ENCODE measurements at regions of chr2 and their contacts with region 1.

Region 1: GRCh38 chr2:230602562-230603230 is 109.9 kb upstream of the CAB39 start:
- DNase-seq: no peak
- ATAC-seq: peak; percentile 70
- H3K4me3 ChIP-seq: peak overlapping the region; percentile 32; the same call in 1 of the 2 replicates
- H3K27ac ChIP-seq: peak overlapping the region; percentile 86
- H3K4me1 ChIP-seq: peaks cover 47% of the 10 kb centered on the region
- H3K27me3 ChIP-seq: no peaks in the 10 kb centered on the region
- CTCF ChIP-seq: no peak
- EP300 ChIP-seq: no peak
- POLR2A ChIP-seq: peak; percentile 74
- RAD21 ChIP-seq: peak; percentile 16; the same call in 1 of the 2 replicates

Region 2: GRCh38 chr2:230411570-230412370 is 190.9 kb before region 1 on chr2:
- CTCF ChIA-PET with region 1: no interaction called
- POLR2A ChIA-PET with region 1: no interaction called
- RAD21 ChIA-PET with region 1: interaction called, 20 read pairs
- SMC1A ChIA-PET with region 1: interaction called, 14 read pairs
- in situ Hi-C with region 1: no loop called
- intact Hi-C with region 1: no loop called
- DNase-seq: no peak
- ATAC-seq: peak; percentile 77
- H3K4me3 ChIP-seq: peak overlapping the region; percentile 77
- H3K27ac ChIP-seq: peak overlapping the region; percentile 79
- H3K4me1 ChIP-seq: peaks cover 35% of the 10 kb centered on the region
- H3K27me3 ChIP-seq: no peaks in the 10 kb centered on the region
- CTCF ChIP-seq: no peak
- EP300 ChIP-seq: no peak
- POLR2A ChIP-seq: peak; percentile 84
- RAD21 ChIP-seq: no peak

Region 3: DNA sequence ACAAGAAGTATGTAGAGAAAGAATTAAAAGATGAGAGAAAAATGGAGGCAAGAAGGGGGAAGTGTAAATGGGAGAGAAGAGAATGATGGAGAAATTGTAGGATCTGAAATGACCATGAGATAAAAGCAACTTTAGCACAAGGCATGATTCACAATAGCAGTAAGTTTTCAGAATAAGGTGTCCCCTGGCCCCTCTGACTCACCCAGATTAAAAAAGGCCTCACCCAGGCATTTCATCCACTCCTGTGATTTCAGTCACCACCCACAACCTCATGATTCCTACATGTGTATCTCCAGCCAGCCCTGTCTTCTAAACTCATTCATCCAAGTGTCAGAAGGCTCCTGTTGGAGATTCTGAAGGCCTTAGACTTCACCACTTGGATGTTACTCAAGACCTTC is 130.1 kb before region 1 on chr2:
- CTCF ChIA-PET with region 1: no interaction called
- POLR2A ChIA-PET with region 1: interaction called, 3 read pairs
- RAD21 ChIA-PET with region 1: interaction called, 7 read pairs
- SMC1A ChIA-PET with region 1: interaction called, 14 read pairs
- in situ Hi-C with region 1: no loop called
- intact Hi-C with region 1: no loop called
- DNase-seq: peak; percentile 34
- ATAC-seq: peak; percentile 71
- H3K4me3 ChIP-seq: no peak overlapping the region
- H3K27ac ChIP-seq: peak overlapping the region; percentile 21
- H3K4me1 ChIP-seq: peaks cover 32% of the 10 kb centered on the region
- H3K27me3 ChIP-seq: no peaks in the 10 kb centered on the region
- CTCF ChIP-seq: no peak
- EP300 ChIP-seq: no peak
- POLR2A ChIP-seq: no peak
- RAD21 ChIP-seq: no peak

Region 4: GRCh38 chr2:230582851-230583283 is 19.8 kb before region 1 on chr2:
- CTCF ChIA-PET with region 1: interaction called, 5 read pairs
- POLR2A ChIA-PET with region 1: interaction called, 17 read pairs
- RAD21 ChIA-PET with region 1: interaction called, 44 read pairs
- SMC1A ChIA-PET with region 1: interaction called, 52 read pairs
- in situ Hi-C with region 1: no loop called
- intact Hi-C with region 1: loop called (anchors 2 kb)
- DNase-seq: peak; percentile 88
- ATAC-seq: peak; percentile 76
- H3K4me3 ChIP-seq: peak overlapping the region; percentile 44; the same call in 1 of the 2 replicates
- H3K27ac ChIP-seq: peak overlapping the region; percentile 97
- H3K4me1 ChIP-seq: peaks cover 57% of the 10 kb centered on the region
- H3K27me3 ChIP-seq: no peaks in the 10 kb centered on the region
- CTCF ChIP-seq: no peak
- EP300 ChIP-seq: peak; percentile 76 to 77; a peak in 3 of 4 replicates
- POLR2A ChIP-seq: no peak
- RAD21 ChIP-seq: no peak

Region 5: GRCh38 chr2:230636684-230637271 is 34.1 kb after region 1 on chr2:
- CTCF ChIA-PET with region 1: interaction called, 3 read pairs
- POLR2A ChIA-PET with region 1: no interaction called
- RAD21 ChIA-PET with region 1: interaction called, 5 read pairs
- SMC1A ChIA-PET with region 1: interaction called, 11 read pairs
- in situ Hi-C with region 1: no loop called
- intact Hi-C with region 1: no loop called
- DNase-seq: no peak
- ATAC-seq: peak; percentile 70
- H3K4me3 ChIP-seq: no peak overlapping the region
- H3K27ac ChIP-seq: peak overlapping the region; percentile 54
- H3K4me1 ChIP-seq: peaks cover 14% of the 10 kb centered on the region
- H3K27me3 ChIP-seq: no peaks in the 10 kb centered on the region
- CTCF ChIP-seq: no peak
- EP300 ChIP-seq: peak in 1 of 2 experiments; percentile 73; a peak in 2 of 4 replicates
- POLR2A ChIP-seq: no peak
- RAD21 ChIP-seq: no peak

Region 6: DNA sequence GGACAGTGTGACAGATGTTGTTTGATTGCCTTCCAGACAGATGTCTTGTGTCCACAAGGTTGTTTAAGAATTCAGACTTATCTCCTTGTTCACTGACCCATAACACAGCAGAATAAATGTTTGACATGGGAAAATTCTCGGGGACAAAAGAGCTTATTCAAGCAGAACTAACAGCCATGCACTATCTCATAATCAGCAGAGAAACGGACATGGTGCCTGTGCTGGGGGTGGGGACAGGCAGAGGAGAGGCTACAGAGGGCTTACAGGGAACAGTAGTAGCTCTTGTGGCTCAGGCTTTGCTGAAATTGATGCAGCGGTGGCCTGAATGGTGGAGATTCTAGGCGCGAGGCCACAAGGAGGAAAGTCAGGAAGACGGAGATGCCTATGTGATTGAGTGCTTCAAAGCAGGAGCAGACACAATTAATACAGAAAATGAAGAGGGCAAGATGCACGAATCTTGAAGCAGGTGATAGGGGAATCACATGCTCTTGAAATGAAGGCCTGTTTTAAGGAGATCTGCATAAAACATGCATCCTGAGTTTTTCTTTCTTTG is 48.0 kb after region 1 on chr2:
- CTCF ChIA-PET with region 1: no interaction called
- POLR2A ChIA-PET with region 1: interaction called, 5 read pairs
- RAD21 ChIA-PET with region 1: interaction called, 15 read pairs
- SMC1A ChIA-PET with region 1: interaction called, 5 read pairs
- in situ Hi-C with region 1: no loop called
- intact Hi-C with region 1: no loop called
- DNase-seq: peak; percentile 93
- ATAC-seq: peak; percentile 97
- H3K4me3 ChIP-seq: peak overlapping the region; percentile 0; the same call in 1 of the 2 replicates
- H3K27ac ChIP-seq: peak overlapping the region; percentile 54
- H3K4me1 ChIP-seq: peaks cover 12% of the 10 kb centered on the region
- H3K27me3 ChIP-seq: no peaks in the 10 kb centered on the region
- CTCF ChIP-seq: no peak
- EP300 ChIP-seq: peak; percentile 33 to 68; a peak in 2 of 4 replicates
- POLR2A ChIP-seq: no peak
- RAD21 ChIP-seq: peak; percentile 22; the same call in 1 of the 2 replicates